ENCODE measurements at regions of chr19 and their contacts with region 1.

Region 1: DNA sequence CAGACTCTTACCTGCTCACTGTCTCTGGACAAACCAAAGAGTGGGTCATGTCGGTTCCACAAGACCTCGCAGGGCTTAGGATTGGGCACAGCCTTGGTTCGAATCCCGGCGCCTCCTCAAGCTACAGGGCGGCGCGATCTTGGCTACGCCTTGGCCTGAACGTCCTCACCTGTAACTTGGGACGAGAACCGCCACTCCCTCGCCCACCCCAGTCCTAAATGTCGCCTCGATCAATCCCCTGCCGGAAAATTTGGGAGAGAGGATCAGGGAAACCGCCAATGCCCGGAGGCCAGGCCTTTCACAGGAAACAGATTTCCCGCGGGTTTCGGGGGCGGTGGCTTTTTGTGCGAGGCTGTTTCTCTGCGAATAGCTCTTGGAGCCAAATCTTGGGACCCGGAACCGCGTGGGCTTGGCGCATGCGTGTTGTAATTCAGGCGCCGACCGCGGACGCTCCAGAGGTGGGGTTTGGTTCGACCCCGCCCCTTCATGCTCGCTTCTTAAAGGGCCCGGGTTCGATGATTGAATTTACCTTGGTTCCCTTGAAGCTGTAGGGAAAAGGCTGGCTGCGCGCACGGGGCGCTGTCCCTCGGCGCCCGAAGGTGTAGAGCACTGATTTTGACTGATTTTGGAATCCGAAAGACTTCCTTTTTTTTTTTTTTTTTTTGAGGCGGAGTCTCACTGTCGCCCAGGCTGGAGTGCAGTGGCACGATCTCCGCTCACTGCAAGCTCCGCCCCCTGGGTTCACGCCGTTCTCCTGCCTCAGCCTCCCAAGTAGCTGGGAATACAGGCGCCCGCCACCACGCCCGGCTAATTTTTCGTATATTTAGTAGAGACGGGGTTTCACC is at the start of gene NR2C2AP:
- DNase-seq: peak; percentile 19
- H3K4me3 ChIP-seq: peak within 1 kb of the TSS; percentile 67
- CTCF ChIP-seq: no peak

Region 2: GRCh38 chr19:19192078-19192882 is 11.0 kb before region 1 on chr19 and contains the starts of genes BORCS8 and RFXANK:
- CTCF ChIA-PET with region 1: interaction called, 3 read pairs
- POLR2A ChIA-PET with region 1: interaction called, 11 read pairs
- DNase-seq: peak; percentile 89
- H3K4me3 ChIP-seq: peak within 1 kb of the TSS; percentile 90
- CTCF ChIP-seq: no peak

Region 3: GRCh38 chr19:19238126-19238852 is 35.1 kb after region 1 on chr19:
- CTCF ChIA-PET with region 1: no interaction called
- POLR2A ChIA-PET with region 1: no interaction called
- DNase-seq: no peak
- H3K4me3 ChIP-seq: no peak overlapping the region
- CTCF ChIP-seq: no peak